Activated CD4-positive, alpha-beta T cell treated with anti-CD3 and anti-CD28 coated beads for 36 hours (primary cell): ENCODE measurements at regions of chr6 and their contacts with region 1.

Region 1: GRCh38 chr6:110233770-110234374 is 53.6 kb downstream of the CDC40 start:
- DNase-seq: no peak
- ATAC-seq: peak; percentile 91
- H3K4me3 Mint-ChIP-seq: no peak overlapping the region
- H3K27ac Mint-ChIP-seq: no peak overlapping the region
- H3K4me1 Mint-ChIP-seq: peaks cover 7% of the 10 kb centered on the region
- H3K27me3 Mint-ChIP-seq: no peaks in the 10 kb centered on the region

Region 2: GRCh38 chr6:110185879-110186278 is 48.0 kb before region 1 on chr6:
- CTCF ChIA-PET with region 1: interaction called, 3 read pairs
- POLR2A ChIA-PET with region 1: no interaction called
- intact Hi-C with region 1: loop called in 1 of 2 experiments (anchors 5 kb)
- DNase-seq: no peak
- ATAC-seq: peak; percentile 78
- H3K4me3 Mint-ChIP-seq: peak overlapping the region; percentile 13
- H3K27ac Mint-ChIP-seq: peak overlapping the region; percentile 56
- H3K4me1 Mint-ChIP-seq: peaks cover 34% of the 10 kb centered on the region
- H3K27me3 Mint-ChIP-seq: no peaks in the 10 kb centered on the region

Region 3: GRCh38 chr6:110265273-110265672 is 31.4 kb after region 1 on chr6:
- CTCF ChIA-PET with region 1: no interaction called
- POLR2A ChIA-PET with region 1: no interaction called
- intact Hi-C with region 1: no loop called
- DNase-seq: no peak
- ATAC-seq: no peak
- H3K4me3 Mint-ChIP-seq: no peak overlapping the region
- H3K27ac Mint-ChIP-seq: no peak overlapping the region
- H3K4me1 Mint-ChIP-seq: no peaks in the 10 kb centered on the region
- H3K27me3 Mint-ChIP-seq: no peaks in the 10 kb centered on the region